ENCODE measurements at regions of chr18 and their contacts with region 1.

Region 1: DNA sequence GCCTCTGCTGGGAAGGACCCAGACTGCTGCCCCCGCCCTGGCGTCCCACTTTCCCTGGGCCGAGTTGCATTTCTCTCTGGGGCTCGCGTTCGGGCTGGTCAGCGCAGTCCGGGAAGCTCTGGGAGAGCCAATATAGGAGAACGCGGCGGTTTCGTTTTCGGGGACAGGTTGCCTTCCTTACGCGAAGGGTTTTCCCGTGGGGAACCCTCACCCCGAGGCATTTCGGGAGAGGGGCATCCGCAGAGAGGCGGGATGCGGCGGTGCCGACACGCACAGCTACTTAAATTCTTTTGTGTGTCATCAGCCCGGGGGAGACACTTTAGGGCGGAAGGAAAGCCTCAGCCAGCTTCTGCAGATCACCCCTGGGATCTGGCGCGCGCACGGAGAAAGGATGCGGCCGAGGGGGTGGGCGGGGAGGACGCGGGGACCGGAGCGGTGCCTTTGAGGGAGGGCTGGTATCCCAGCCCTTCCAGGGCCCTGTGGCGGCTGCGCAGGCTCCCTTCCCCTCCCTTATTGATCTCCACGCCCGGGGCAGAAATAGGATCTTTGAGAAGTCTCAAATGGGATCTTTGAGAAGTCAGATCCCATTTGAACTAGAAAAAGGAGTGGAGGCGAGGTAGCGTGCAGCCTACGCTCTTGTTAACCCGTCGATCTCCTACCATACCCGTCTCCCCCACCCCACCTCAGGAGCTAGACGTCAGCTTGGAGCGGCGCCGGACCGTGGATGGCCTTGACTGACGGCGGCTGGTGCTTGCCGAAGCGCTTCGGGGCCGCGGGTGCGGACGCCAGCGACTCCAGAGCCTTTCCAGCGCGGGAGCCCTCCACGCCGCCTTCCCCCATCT is 1.3 kb downstream of the GATA6 start:
- DNase-seq: peak; percentile 24
- H3K4me3 ChIP-seq: peak overlapping the region; percentile 82
- H3K27ac ChIP-seq: peak overlapping the region; percentile 75
- H3K27me3 ChIP-seq: peaks cover 31% of the 10 kb centered on the region
- CTCF ChIP-seq: no peak

Region 2: DNA sequence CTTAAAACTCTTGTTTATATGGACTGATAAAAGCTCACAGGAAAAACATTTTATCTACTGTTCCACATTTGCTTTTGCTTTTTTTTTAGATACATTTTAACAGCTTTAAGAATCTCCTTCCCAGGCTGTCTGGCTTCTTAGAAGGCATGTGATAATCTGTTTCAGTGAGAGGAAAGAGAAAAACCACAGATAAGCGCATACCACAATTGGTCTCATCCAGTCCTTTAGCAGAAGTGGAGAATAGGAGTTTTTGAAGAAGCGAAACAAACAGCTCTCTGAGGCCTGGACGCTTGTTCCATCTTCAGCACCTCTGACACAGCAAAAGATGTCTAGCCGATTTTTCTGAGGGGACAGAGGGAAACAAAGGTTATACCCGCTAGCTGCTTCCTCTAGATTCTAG is 1370.2 kb after region 1 on chr18:
- CTCF ChIA-PET with region 1: interaction called, 11 read pairs
- POLR2A ChIA-PET with region 1: no interaction called
- DNase-seq: no peak
- H3K4me3 ChIP-seq: no peak overlapping the region
- H3K27ac ChIP-seq: no peak overlapping the region
- H3K27me3 ChIP-seq: no peaks in the 10 kb centered on the region
- CTCF ChIP-seq: no peak